ENCODE measurements at regions of chr13 and their contacts with region 1.

Region 1: GRCh38 chr13:66391322-66391721 is 838.8 kb downstream of the PCDH9 start:
- DNase-seq: no peak
- ATAC-seq: no peak
- H3K4me3 ChIP-seq: no peak overlapping the region
- H3K27ac ChIP-seq: no peak overlapping the region
- H3K4me1 ChIP-seq: no peaks in the 10 kb centered on the region
- H3K27me3 ChIP-seq: no peaks in the 10 kb centered on the region
- CTCF ChIP-seq: no peak
- POLR2A ChIP-seq: no peak
- RAD21 ChIP-seq: no peak

Region 2: GRCh38 chr13:65553096-65553727 is 838.1 kb before region 1 on chr13:
- CTCF ChIA-PET with region 1: no interaction called
- POLR2A ChIA-PET with region 1: no interaction called
- RAD21 ChIA-PET with region 1: no interaction called
- intact Hi-C with region 1: no loop called
- DNase-seq: no peak
- ATAC-seq: no peak
- H3K4me3 ChIP-seq: no peak overlapping the region
- H3K27ac ChIP-seq: no peak overlapping the region
- H3K4me1 ChIP-seq: no peaks in the 10 kb centered on the region
- H3K27me3 ChIP-seq: no peaks in the 10 kb centered on the region
- CTCF ChIP-seq: no peak
- POLR2A ChIP-seq: no peak
- RAD21 ChIP-seq: no peak

Region 3: DNA sequence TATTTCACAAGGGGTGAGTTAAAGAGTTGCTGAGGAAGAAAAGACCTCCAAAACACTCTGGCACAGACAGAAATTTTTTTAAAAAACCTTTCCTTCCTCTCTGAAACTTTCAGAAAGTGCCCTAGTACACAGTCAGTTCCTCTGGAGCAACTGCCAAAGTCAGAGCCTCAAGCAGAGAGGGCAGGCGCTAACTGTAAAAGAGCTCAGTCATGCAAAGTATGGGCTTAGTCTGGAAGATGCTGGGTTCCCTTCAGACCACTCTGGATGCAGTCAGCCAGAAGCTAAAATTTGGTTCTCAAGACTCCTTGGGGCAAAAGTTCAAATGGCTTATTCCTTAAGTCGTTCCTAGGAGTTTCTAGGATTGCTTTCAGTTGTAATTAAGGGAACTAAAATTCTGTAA is 167.2 kb after region 1 on chr13:
- CTCF ChIA-PET with region 1: no interaction called
- POLR2A ChIA-PET with region 1: no interaction called
- RAD21 ChIA-PET with region 1: no interaction called
- intact Hi-C with region 1: no loop called
- DNase-seq: no peak
- ATAC-seq: no peak
- H3K4me3 ChIP-seq: no peak overlapping the region
- H3K27ac ChIP-seq: no peak overlapping the region
- H3K4me1 ChIP-seq: no peaks in the 10 kb centered on the region
- H3K27me3 ChIP-seq: no peaks in the 10 kb centered on the region
- CTCF ChIP-seq: no peak
- POLR2A ChIP-seq: no peak
- RAD21 ChIP-seq: no peak

Region 4: DNA sequence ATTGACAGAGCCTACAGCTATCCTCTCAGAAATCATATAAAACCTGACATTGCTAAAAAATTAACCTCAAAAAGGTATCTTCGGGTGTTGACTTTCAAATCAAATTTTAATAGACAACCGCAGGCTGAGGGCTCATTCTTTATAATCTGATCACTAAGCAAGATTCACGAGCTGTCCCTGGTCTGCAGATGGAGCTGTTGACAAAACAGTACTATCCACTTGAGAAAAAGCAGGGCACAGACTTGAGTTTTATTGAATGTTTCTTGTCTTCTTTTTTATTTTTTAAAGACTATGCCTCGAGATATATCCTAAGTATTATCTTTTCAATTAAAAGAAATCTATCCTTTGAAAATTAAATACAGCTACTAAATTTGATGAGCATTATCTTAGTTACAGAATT is 298.3 kb after region 1 on chr13:
- CTCF ChIA-PET with region 1: no interaction called
- POLR2A ChIA-PET with region 1: no interaction called
- RAD21 ChIA-PET with region 1: no interaction called
- intact Hi-C with region 1: loop called (anchors 5 kb)
- DNase-seq: no peak
- ATAC-seq: no peak
- H3K4me3 ChIP-seq: no peak overlapping the region
- H3K27ac ChIP-seq: no peak overlapping the region
- H3K4me1 ChIP-seq: no peaks in the 10 kb centered on the region
- H3K27me3 ChIP-seq: no peaks in the 10 kb centered on the region
- CTCF ChIP-seq: no peak
- POLR2A ChIP-seq: no peak
- RAD21 ChIP-seq: peak; percentile 39; the same call in 1 of the 2 replicates